GM18951 (cell line): ENCODE measurements at regions of chr4 and their contacts with region 1.

Region 1: GRCh38 chr4:105471566-105472176 is 2.2 kb downstream of the PPA2 start:
- POLR2A ChIP-seq: no peak

Region 2: GRCh38 chr4:104420766-104421165 is 1050.9 kb before region 1 on chr4:
- in situ Hi-C with region 1: no loop called
- POLR2A ChIP-seq: no peak

Region 3: DNA sequence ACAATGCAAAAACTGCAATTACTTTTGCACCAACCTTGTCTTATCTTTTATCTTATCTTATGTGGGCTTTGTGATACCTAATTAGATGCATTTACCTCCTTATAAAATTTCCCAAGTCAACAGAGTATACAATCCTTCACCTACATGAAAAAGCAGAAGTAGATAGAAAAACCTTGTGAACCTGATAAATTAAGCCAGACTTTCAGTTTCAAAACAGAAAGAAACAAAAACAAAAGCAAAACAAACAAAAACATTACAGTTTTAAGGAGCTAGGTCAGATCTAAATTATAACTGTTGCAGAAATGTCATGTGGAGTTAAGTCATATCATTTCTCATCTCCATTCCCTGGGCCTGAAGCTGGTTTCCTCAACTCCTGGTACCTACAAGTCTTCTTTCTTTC is 952.1 kb before region 1 on chr4:
- in situ Hi-C with region 1: loop called (anchors 25 kb)
- POLR2A ChIP-seq: no peak

Region 4: GRCh38 chr4:104901438-104901837 is 570.2 kb before region 1 on chr4:
- in situ Hi-C with region 1: loop called (anchors 25 kb)
- POLR2A ChIP-seq: no peak

Region 5: GRCh38 chr4:105146276-105147015 is 325.2 kb before region 1 on chr4 and contains the start of gene TET2:
- in situ Hi-C with region 1: loop called (anchors 5 kb)
- POLR2A ChIP-seq: peak; percentile 73

Region 6: GRCh38 chr4:105361053-105361452 is 110.6 kb before region 1 on chr4:
- in situ Hi-C with region 1: no loop called
- POLR2A ChIP-seq: no peak